ENCODE measurements at regions of chr10 and their contacts with region 1.

Region 1: DNA sequence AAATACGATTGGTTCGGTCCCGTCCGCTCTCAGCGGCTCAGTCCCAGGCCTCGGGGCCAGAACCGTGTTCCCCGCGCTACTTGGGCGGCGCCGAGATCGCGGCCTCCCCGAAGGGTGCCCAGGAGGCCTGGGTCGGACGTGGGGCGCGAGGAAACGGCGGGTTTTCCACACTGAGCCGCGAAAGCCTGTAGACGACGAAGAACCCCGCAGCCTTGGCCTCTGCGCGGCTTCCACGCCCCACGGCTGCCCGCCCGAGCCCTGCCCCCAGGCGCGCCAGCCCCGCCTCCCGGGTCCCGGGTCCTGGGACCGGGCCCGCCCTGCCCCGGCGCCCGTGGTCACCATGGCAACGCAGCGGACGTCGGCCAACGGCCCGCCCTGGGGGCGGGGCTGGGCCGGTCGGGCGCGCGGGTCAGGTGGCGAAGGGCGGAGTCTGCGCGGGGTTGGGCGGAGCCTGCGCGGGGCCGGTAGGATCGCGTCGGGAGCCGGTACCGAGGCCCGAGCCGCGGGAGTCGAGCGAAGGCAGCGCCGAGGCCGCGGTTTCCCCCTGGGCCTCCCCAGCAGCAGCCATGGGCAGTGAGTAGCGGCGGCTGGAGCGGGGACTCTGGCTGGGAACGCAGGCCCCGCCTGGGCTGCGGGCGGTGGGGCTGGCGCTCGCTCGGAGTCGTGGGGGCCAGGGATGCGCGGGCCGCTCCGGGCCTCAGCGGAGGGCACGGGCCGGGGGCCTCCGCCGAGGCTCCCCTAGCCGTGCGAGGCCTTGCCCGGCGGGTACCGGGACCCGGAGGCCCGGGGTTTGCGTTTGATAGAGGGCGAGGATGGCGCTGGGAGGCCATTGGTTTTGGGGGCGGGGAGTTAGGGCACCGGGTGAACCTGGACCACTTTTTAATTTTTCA is at the start of gene SEC61A2:
- DNase-seq: peak; percentile 99
- H3K4me3 Mint-ChIP-seq: peak within 1 kb of the TSS; percentile 94
- H3K27ac Mint-ChIP-seq: peak within 1 kb of the TSS; percentile 90
- H3K4me1 Mint-ChIP-seq: peaks cover 49% of the 10 kb centered on the region
- H3K27me3 Mint-ChIP-seq: no peaks in the 10 kb centered on the region
- total RNA-seq, gene SEC61A2: 21.9 and 22.1 TPM in 2 replicates

Region 2: GRCh38 chr10:11921800-11922392 is 207.6 kb before region 1 on chr10:
- intact Hi-C with region 1: no loop called
- DNase-seq: no peak
- H3K4me3 Mint-ChIP-seq: no peak overlapping the region
- H3K27ac Mint-ChIP-seq: peak overlapping the region; percentile 10
- H3K4me1 Mint-ChIP-seq: no peaks in the 10 kb centered on the region
- H3K27me3 Mint-ChIP-seq: no peaks in the 10 kb centered on the region

Region 3: GRCh38 chr10:12042797-12043651 is 86.4 kb before region 1 on chr10 and contains the start of gene UPF2:
- intact Hi-C with region 1: loop called (anchors 1 kb)
- DNase-seq: peak; percentile 94
- H3K4me3 Mint-ChIP-seq: peak within 1 kb of the TSS; percentile 99
- H3K27ac Mint-ChIP-seq: peak within 1 kb of the TSS; percentile 99
- H3K4me1 Mint-ChIP-seq: peaks cover 34% of the 10 kb centered on the region
- H3K27me3 Mint-ChIP-seq: no peaks in the 10 kb centered on the region
- total RNA-seq, gene UPF2: 38.9 and 43.6 TPM in 2 replicates

Region 4: GRCh38 chr10:12113627-12114026 is 15.8 kb before region 1 on chr10:
- intact Hi-C with region 1: loop called (anchors 2 kb)
- DNase-seq: no peak
- H3K4me3 Mint-ChIP-seq: no peak overlapping the region
- H3K27ac Mint-ChIP-seq: peak overlapping the region; percentile 90
- H3K4me1 Mint-ChIP-seq: peaks cover 44% of the 10 kb centered on the region
- H3K27me3 Mint-ChIP-seq: no peaks in the 10 kb centered on the region

Region 5: DNA sequence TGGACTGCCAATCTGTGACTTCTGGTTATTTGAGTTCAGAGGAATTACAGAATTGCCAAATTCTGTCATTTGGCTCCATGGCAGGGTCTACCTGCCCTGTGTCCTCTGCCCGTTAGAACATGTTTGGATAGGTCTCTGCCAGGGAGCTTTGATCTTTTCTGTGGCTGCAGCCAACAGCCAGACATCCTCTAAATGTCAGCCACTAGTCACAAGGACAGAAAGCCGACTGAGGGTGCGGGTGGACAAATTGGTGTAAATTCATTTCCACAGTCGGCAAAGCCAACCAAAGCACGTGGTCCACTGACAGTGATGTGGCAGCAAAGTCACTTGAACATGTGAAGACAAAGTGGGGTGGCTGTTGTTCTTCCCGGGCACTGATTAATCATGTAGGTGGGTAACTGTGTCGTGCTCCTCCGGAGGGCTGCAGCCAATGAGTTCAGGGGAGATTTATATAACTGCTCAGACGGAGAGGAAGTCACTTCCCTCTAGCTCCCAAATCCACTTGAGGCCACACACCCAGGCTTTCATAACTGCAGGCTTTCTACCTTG is 193.2 kb after region 1 on chr10:
- intact Hi-C with region 1: no loop called
- DNase-seq: no peak
- H3K4me3 Mint-ChIP-seq: no peak overlapping the region
- H3K27ac Mint-ChIP-seq: no peak overlapping the region
- H3K4me1 Mint-ChIP-seq: no peaks in the 10 kb centered on the region
- H3K27me3 Mint-ChIP-seq: peaks cover 10% of the 10 kb centered on the region

Measured in activated T-helper 1 cell treated with anti-CD3 and anti-CD28 coated beads, Interleukin-12 subunit alpha, Interleukin-12 subunit beta, Interleukin-2, Interleukin-4 antibody, amounts not matched to agents 30 ng/mL and 10 ng/mL and 1 ng/mL, durations not matched to agents 14 hours and 24 hours and 36 hours (primary cell).